Mammary epithelial cell (primary cell): ENCODE measurements at regions of chr14 and their contacts with region 1.

Region 1: DNA sequence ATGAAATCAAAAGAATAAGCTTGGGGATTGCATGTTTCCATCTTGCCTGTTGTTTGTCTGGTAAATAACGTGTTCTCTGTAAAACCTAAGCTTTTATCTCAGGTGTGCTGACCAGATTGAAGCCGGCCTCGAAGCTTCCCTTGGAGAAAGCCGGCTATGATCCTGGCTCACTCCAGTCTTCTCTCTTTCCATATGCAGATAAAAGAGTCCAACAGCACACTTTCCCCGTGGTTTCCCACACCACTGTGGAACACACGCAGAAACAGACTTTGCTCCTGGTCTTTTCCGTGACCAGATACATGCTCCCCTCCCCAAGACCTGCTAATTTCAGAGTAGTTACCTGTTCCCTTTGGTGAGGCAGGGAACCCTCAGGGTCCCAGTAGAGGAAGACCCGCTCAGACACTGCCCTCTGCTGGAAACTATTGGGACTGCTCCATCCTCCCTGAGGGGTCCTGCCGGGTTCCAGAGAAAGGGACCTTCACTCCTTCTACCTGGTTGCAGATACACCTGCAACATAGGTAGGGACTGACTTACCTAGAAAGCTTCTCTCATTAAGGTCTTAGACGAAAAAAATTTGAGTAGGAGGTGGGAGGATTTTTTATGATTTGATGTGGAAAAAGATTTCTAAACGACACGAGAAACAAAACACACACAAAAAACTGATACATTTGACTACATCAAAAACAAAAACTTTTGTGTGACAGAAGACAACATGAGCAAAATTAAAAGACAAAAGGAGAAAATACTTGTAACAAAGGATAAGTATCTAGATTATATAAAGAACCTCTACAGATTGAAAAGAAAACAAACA is 415.5 kb upstream of the CCDC196 start:
- DNase-seq: peak; percentile 31
- H3K4me3 ChIP-seq: no peak overlapping the region
- H3K27ac ChIP-seq: no peak overlapping the region
- H3K4me1 ChIP-seq: peaks cover 16% of the 10 kb centered on the region
- H3K27me3 ChIP-seq: no peaks in the 10 kb centered on the region
- CTCF ChIP-seq: peak; percentile 72 to 83

Region 2: DNA sequence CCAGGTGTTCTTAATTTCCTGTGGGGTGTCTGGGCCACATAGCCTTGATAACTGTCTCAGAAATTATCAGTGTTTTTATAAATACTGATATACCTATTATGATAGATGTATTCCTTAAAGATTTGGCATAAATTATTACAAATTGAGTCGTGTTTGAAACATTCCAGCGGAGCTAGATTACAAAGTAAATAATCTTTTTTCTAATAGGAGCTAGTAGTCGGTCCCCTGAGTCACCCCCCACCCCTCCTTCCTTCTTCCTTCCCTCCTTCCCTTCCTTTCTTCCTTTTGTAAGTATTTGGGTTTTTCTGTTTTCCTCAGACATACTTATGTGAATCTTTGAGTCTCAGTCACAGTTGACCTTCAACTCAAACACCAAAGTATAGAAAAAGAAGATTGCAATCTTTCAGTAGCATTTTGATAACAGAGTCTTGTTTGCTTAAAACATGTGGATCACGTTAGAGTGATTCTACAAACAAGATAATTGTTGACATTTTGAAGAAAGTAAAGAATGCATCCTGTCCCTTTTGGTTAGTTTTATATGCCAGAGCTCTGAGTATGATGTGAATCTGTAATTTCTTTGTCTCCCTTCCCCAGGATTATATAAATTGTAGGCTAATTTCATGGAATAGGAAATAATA is 394.2 kb before region 1 on chr14:
- CTCF ChIA-PET with region 1: no interaction called
- dilution Hi-C with region 1: no loop called
- in situ Hi-C with region 1: no loop called
- intact Hi-C with region 1: no loop called
- DNase-seq: no peak
- H3K4me3 ChIP-seq: no peak overlapping the region
- H3K27ac ChIP-seq: no peak overlapping the region
- H3K4me1 ChIP-seq: no peaks in the 10 kb centered on the region
- H3K27me3 ChIP-seq: no peaks in the 10 kb centered on the region
- CTCF ChIP-seq: no peak

Region 3: DNA sequence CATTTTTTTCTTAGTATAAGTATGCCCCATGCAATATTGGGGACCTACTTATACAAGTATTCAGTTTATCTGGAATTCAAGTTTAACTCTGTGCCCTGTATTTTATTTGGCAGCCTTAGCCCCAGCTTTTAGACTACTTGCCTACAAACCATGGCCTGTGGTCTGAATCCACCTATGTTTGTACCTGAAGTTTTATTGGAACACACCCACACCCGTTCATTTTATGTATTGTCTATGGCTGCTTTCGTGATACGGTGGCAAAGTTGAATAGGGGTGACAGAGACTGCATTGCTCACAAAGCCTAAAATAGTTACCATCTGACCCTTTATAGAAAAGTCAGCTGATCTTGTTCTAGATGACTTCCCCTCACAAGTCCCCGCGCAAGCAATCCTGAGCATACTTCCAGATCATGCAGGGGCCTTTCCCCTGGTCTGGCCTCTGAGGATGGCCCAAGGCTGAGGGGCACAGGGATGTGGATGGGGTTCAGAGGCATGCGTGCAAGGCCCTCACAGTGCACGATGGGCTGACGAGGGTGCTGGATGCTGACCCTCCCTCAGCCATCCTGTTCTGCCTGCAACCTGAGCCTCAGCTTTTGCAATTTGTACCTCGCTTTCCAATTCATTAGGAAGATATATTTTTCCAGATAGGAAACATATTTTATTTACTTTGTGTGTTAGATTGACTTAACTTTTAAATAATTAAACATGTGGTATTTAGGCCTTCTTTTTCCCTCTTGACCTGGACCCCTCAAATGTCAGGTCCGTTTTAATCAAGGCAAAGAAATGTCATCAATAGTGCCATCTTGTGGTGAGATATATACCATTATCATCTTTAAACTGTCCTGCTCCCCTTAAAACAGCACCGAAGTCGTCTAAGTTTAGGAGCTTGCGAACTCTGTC is 111.8 kb before region 1 on chr14:
- CTCF ChIA-PET with region 1: no interaction called
- dilution Hi-C with region 1: no loop called
- in situ Hi-C with region 1: no loop called
- intact Hi-C with region 1: loop called (anchors 1 kb)
- DNase-seq: no peak
- H3K4me3 ChIP-seq: no peak overlapping the region
- H3K27ac ChIP-seq: no peak overlapping the region
- H3K4me1 ChIP-seq: no peaks in the 10 kb centered on the region
- H3K27me3 ChIP-seq: no peaks in the 10 kb centered on the region
- CTCF ChIP-seq: peak; percentile 27 to 54

Region 4: DNA sequence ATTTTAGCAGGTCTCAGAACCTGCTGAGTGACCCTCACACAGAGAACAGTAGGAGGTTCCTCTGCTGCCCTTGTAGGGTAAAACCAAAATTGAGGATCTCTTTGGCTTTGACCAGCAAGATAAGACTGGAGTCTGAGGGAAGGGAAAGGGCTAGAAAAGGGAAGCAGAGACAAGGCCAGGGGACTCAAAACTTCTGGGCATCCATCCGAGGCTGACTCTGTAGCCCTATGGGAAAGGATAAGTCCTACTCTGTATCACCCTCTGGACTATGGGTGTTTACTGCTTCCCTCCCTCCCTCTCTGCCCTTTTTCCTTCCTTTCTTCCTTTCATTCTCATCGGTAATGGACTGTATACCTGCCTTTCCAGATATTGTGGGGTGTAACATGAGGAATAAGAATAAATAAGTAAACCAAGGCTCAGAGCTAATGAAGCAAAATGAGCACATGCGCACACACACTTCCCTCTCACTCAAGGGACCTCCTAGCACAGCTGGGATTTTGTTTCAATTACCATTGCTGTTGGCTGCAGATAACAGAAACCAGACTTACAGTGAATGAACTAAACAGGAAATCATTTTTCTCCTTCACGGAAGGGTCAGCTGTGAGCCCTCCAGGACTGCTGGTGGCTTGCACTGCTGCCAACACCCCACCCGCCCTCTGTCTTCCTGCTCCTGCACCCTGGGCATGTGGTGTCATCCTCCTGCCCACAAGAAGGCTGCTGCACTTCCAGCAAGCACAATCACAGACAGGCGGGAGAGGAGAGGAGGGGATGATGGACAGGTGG is 11.1 kb after region 1 on chr14:
- CTCF ChIA-PET with region 1: no interaction called
- dilution Hi-C with region 1: no loop called
- in situ Hi-C with region 1: no loop called
- intact Hi-C with region 1: no loop called
- DNase-seq: no peak
- H3K4me3 ChIP-seq: no peak overlapping the region
- H3K27ac ChIP-seq: no peak overlapping the region
- H3K4me1 ChIP-seq: no peaks in the 10 kb centered on the region
- H3K27me3 ChIP-seq: peaks cover 2% of the 10 kb centered on the region
- CTCF ChIP-seq: no peak

Region 5: GRCh38 chr14:66403183-66403582 is 332.5 kb after region 1 on chr14:
- CTCF ChIA-PET with region 1: no interaction called
- dilution Hi-C with region 1: no loop called
- in situ Hi-C with region 1: no loop called
- intact Hi-C with region 1: no loop called
- DNase-seq: peak; percentile 50
- H3K4me3 ChIP-seq: no peak overlapping the region
- H3K27ac ChIP-seq: no peak overlapping the region
- H3K4me1 ChIP-seq: no peaks in the 10 kb centered on the region
- H3K27me3 ChIP-seq: no peaks in the 10 kb centered on the region
- CTCF ChIP-seq: peak; percentile 48 to 72